ENCODE measurements at regions of chr1 and their contacts with region 1.

Region 1: DNA sequence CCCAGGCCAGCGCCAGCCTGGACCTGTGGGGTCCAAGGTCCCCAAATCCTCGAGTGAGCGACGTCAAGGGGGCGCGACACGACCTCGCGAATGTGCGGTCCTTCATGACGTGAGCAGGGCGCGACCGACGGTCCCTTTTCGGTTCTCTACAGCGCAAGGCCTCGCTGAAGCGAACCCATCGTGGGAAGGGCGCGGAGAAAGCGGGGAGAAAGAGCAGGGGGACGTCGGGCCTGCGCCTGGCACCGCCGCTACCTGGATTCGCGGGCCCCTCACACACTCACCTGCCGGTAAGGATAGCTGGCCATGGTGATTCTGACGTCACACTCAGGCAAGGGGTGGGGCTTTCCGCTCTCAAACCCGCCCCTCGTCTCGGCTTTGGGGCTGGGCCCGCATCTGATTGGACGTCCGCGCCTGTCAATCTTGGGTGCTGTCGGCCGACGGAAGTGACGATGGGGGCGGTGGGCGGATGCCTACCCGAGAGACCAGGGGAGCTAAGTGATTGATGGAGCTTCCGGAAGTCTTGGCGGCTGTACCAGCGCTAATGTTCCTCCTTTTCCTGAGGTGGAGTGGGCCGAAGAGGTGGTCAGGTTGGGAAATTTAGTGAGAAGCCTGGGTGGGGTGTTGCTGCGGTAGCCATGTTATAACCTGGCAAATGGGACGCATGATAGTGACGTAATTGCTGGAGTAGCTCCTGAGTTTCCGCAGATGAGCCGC is at the start of gene PEF1:
- DNase-seq: peak; percentile 100
- CTCF ChIP-seq: no peak

Region 2: DNA sequence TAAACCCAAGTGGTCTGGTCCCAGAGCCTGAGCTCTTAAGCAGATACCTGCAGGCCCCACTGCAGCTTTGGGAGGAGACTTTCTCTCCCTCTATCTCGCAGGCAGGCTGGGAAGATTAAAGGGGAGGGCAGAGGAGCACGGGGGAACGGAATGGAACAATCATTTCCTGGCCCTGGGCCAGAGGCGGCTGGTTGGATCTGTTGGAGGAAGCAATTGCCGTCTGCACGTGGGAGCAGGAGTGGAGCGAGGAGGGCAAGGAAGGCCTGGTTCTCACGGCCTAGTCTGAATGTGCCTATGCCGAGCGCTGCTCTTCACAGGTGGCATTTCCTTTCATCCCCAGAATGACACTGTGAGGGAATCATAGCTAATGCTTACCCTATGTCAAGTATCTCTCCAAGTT is 428.7 kb before region 1 on chr1:
- CTCF ChIA-PET with region 1: no interaction called
- POLR2A ChIA-PET with region 1: no interaction called
- DNase-seq: no peak
- CTCF ChIP-seq: no peak

Region 3: GRCh38 chr1:31633053-31633452 is 11.7 kb before region 1 on chr1:
- CTCF ChIA-PET with region 1: interaction called, 21 read pairs
- POLR2A ChIA-PET with region 1: no interaction called
- DNase-seq: no peak
- CTCF ChIP-seq: peak; percentile 29